H1 (cell line): ENCODE measurements at regions of chr5 and their contacts with region 1.

Region 1: GRCh38 chr5:178304761-178305645 is 72.4 kb upstream of the PHYKPL start:
- DNase-seq: no peak
- H3K4me3 ChIP-seq: no peak overlapping the region
- H3K27ac ChIP-seq: no peak overlapping the region
- H3K4me1 ChIP-seq: peaks cover 0 to 9% (median 1%) of the 10 kb centered on the region in 4 experiments; a peak in 2 of 7 replicates
- H3K27me3 ChIP-seq: no peaks in the 10 kb centered on the region
- CTCF ChIP-seq: no peak
- EP300 ChIP-seq: no peak
- POLR2A ChIP-seq: no peak
- RAD21 ChIP-seq: no peak

Region 2: GRCh38 chr5:178324481-178325310 is 19.7 kb after region 1 on chr5:
- CTCF ChIA-PET with region 1: interaction called, 17 read pairs
- POLR2A ChIA-PET with region 1: interaction called, 5 read pairs
- DNase-seq: peak in 1 of 2 experiments; percentile 45
- H3K4me3 ChIP-seq: no peak overlapping the region
- H3K27ac ChIP-seq: no peak overlapping the region
- H3K4me1 ChIP-seq: peaks cover 0 to 15% (median 7%) of the 10 kb centered on the region in 4 experiments; a peak in 4 of 7 replicates
- H3K27me3 ChIP-seq: no peaks in the 10 kb centered on the region
- CTCF ChIP-seq: no peak
- EP300 ChIP-seq: no peak
- POLR2A ChIP-seq: no peak
- RAD21 ChIP-seq: no peak

Region 3: GRCh38 chr5:178551059-178551458 is 246.1 kb after region 1 on chr5:
- CTCF ChIA-PET with region 1: interaction called, 10 read pairs
- POLR2A ChIA-PET with region 1: no interaction called
- DNase-seq: no peak
- H3K4me3 ChIP-seq: no peak overlapping the region
- H3K27ac ChIP-seq: no peak overlapping the region
- H3K4me1 ChIP-seq: peaks cover 2 to 14% (median 6%) of the 10 kb centered on the region in 4 experiments
- H3K27me3 ChIP-seq: peaks cover 0 to 2% (median 0%) of the 10 kb centered on the region in 4 experiments; a peak in 2 of 7 replicates
- CTCF ChIP-seq: peak in 1 of 3 experiments; percentile 2; a peak in 2 of 4 replicates
- EP300 ChIP-seq: no peak
- POLR2A ChIP-seq: no peak
- RAD21 ChIP-seq: peak in 1 of 2 experiments; percentile 33; a peak in 3 of 4 replicates

Region 4: DNA sequence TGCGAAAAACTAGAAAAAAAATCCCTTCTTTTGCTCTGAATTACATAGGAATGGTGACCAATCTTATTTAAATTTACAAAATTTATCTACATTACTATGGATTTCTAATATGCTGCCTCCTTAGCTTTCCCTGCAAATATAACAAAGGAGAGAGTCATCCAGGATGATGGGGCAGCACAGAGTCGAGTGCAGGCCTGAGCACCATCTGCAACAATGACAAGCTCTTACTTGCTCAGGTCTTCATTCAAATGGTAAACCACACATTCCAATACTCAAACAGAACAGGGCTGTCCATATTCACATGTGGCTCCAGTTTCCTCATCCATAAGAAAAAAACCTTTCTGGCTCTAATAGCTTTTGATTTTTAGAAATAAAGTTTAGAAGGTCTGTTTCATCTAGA is 521.2 kb after region 1 on chr5:
- CTCF ChIA-PET with region 1: no interaction called
- POLR2A ChIA-PET with region 1: no interaction called
- DNase-seq: no peak
- H3K4me3 ChIP-seq: no peak overlapping the region
- H3K27ac ChIP-seq: no peak overlapping the region
- H3K4me1 ChIP-seq: no peaks in the 10 kb centered on the region
- H3K27me3 ChIP-seq: no peaks in the 10 kb centered on the region
- CTCF ChIP-seq: no peak
- EP300 ChIP-seq: no peak
- POLR2A ChIP-seq: no peak
- RAD21 ChIP-seq: no peak